Sciatic nerve (tissue), 2 donors: ENCODE measurements at regions of chr11 and their contacts with region 1.

Region 1: DNA sequence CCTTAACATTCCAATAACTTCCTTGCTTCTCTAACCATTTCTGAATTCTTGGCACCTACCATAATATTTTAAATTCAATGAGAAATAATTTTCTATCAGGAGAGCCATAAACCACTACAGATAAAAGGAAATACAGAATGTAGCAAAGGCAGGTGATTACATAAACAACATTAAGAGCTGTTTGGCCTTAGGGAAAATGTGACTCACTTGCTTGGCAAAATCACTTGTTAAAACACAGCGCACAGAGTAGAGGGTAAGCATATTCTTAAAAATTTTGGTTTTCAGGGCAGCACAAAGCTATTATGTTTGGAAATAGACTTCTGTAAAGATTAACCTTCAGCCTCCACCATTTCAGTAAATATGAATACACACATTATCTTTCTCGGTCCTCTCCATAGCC is 26.4 kb downstream of the IZUMO1R start:
- DNase-seq: no peak
- ATAC-seq: peak; percentile 69

Region 2: DNA sequence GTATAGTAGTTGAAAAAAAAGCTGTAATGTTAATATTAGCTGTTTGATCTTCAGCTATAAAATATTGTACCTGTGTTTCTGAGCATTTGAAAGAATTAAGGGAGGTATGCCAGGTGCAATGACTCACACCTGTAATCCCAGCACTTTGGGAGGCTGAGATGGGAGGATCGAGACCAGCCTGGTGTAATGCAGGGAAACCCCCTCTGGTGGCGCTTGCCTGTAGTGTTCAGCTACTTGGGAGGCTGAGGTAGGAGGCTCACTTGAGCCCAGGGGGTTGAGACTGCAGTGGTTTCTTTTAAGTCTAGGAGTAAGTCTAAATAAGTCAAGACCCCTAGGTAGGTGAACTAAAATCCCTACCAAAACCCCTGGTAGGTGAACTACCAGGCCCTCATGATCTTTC is 626.6 kb before region 1 on chr11:
- intact Hi-C with region 1: loop called (anchors 10 kb)
- DNase-seq: no peak
- ATAC-seq: no peak